Upper lobe of right lung (tissue), 1 donor: ENCODE measurements at regions of chr21 and their contacts with region 1.

Region 1: GRCh38 chr21:44428281-44428942 is 26.9 kb upstream of the LRRC3 start:
- DNase-seq: peak; percentile 65
- ATAC-seq: peak; percentile 40
- H3K4me3 ChIP-seq: no peak overlapping the region
- H3K27ac ChIP-seq: no peak overlapping the region
- H3K4me1 ChIP-seq: no peaks in the 10 kb centered on the region
- H3K27me3 ChIP-seq: no peaks in the 10 kb centered on the region
- CTCF ChIP-seq: no peak

Region 2: GRCh38 chr21:44643741-44644310 is 215.4 kb after region 1 on chr21:
- intact Hi-C with region 1: loop called (anchors 5 kb)
- DNase-seq: no peak
- ATAC-seq: no peak
- H3K4me3 ChIP-seq: no peak overlapping the region
- H3K27ac ChIP-seq: no peak overlapping the region
- H3K4me1 ChIP-seq: no peaks in the 10 kb centered on the region
- H3K27me3 ChIP-seq: no peaks in the 10 kb centered on the region
- CTCF ChIP-seq: no peak

Region 3: GRCh38 chr21:44657635-44658540 is 229.5 kb after region 1 on chr21 and contains the start of gene KRTAP12-3:
- intact Hi-C with region 1: no loop called
- DNase-seq: no peak
- ATAC-seq: no peak
- H3K4me3 ChIP-seq: no peak within 1 kb of the TSS
- H3K27ac ChIP-seq: no peak within 1 kb of the TSS
- H3K4me1 ChIP-seq: no peaks in the 10 kb centered on the region
- H3K27me3 ChIP-seq: no peaks in the 10 kb centered on the region
- CTCF ChIP-seq: no peak
- total RNA-seq, gene KRTAP12-3: not detected

Region 4: DNA sequence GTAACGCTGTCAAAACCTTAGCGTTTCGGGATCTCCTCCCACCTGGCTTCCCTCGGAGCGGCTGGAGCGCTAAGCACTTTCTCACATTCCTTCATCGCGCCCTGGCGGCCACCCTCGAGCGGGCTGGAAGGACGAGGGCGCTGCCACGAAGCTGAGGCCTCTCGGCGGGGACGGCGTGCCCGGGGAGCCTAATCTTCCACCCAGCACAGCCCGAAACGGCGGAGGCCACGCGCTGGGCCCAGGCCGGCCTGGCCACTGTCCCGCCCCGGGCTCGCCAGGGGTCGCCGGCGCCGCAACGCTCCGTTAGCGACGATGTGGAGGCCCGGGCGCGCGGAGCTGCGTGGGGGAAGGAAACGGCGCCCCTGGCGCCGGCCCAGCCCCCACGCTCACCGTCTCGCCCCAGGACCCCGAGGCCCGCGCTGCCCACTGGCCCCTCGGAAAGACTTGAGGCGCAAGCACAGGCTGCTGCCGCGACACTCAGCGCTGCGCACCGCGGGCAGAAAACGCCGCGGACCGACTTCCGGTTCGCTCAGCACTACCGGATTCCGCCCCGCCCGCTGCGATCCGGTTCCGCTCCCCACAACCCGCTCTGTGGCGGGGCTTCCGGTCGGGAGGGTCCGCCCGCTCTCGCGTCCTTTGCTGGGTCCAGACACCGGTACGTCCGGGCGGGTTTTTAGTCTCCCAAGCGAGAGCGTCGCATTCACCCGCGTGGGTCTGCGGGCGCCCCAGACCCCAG is 1857.5 kb after region 1 on chr21 and contains the start of gene YBEY:
- intact Hi-C with region 1: no loop called
- DNase-seq: peak; percentile 96
- ATAC-seq: peak; percentile 98
- H3K4me3 ChIP-seq: peak within 1 kb of the TSS; percentile 80
- H3K27ac ChIP-seq: peak within 1 kb of the TSS; percentile 95
- H3K4me1 ChIP-seq: peaks cover 53% of the 10 kb centered on the region
- H3K27me3 ChIP-seq: no peaks in the 10 kb centered on the region
- CTCF ChIP-seq: peak; percentile 23
- total RNA-seq, gene YBEY: 14.0 TPM